Activated CD4-positive, alpha-beta memory T cell treated with anti-CD3 and anti-CD28 coated beads for 36 hours (primary cell): ENCODE measurements at regions of chr6 and their contacts with region 1.

Region 1: DNA sequence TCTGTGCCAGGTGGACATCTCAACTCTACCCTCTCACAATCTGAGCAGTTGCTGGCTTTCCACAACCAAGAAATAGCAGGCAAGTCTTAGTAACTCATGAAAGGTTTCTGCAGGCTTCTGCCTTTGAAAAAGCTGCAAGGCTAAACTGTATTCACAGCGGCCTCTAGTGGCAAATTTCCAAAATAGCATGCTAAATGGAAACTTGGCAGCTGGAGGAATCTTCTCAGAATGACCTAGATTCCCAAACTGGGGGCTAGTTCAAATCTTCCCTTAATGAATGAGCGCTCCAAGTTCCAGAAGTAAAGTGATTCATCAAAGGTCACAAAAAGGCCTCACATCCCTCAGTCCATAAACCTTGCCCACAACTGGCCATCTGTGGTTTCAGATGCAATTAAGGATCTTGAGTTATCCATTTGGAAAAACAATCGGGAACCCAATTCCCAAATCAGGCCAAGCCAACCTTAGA is 11.9 kb upstream of the CPNE5 start:
- DNase-seq: peak; percentile 34
- H3K4me3 Mint-ChIP-seq: no peak overlapping the region
- H3K27ac Mint-ChIP-seq: no peak overlapping the region
- H3K4me1 Mint-ChIP-seq: no peaks in the 10 kb centered on the region
- H3K27me3 Mint-ChIP-seq: no peaks in the 10 kb centered on the region

Region 2: GRCh38 chr6:36780442-36781177 is 70.6 kb before region 1 on chr6:
- CTCF ChIA-PET with region 1: interaction called, 28 read pairs
- POLR2A ChIA-PET with region 1: no interaction called
- intact Hi-C with region 1: loop called (anchors 2 kb)
- DNase-seq: no peak
- H3K4me3 Mint-ChIP-seq: no peak overlapping the region
- H3K27ac Mint-ChIP-seq: no peak overlapping the region
- H3K4me1 Mint-ChIP-seq: peaks cover 2% of the 10 kb centered on the region
- H3K27me3 Mint-ChIP-seq: no peaks in the 10 kb centered on the region

Region 3: DNA sequence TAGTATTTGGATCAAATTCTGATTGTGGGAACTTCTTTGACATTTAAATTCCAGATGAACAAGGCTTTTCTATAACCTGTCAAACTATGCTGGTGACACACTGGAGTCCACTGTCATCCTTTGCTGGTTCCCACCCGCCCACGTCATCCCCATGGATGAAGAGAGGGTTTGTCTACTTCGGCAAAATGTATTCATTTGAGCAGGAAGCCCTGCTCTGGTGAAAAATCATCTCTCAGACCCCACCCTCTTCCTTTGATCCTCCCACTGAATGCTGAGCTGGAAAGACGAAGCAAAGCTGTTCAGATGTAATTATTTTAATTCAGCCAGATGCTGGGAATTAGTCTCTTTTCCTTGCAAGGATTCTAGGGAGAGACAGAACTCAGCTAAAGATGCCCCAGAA is 62.4 kb before region 1 on chr6:
- CTCF ChIA-PET with region 1: interaction called, 28 read pairs
- POLR2A ChIA-PET with region 1: no interaction called
- intact Hi-C with region 1: loop called (anchors 2 kb)
- DNase-seq: peak; percentile 65
- H3K4me3 Mint-ChIP-seq: no peak overlapping the region
- H3K27ac Mint-ChIP-seq: no peak overlapping the region
- H3K4me1 Mint-ChIP-seq: peaks cover 5% of the 10 kb centered on the region
- H3K27me3 Mint-ChIP-seq: peaks cover 5% of the 10 kb centered on the region

Region 4: GRCh38 chr6:36822506-36823269 is 28.5 kb before region 1 on chr6:
- CTCF ChIA-PET with region 1: no interaction called
- POLR2A ChIA-PET with region 1: no interaction called
- intact Hi-C with region 1: no loop called
- DNase-seq: no peak
- H3K4me3 Mint-ChIP-seq: no peak overlapping the region
- H3K27ac Mint-ChIP-seq: no peak overlapping the region
- H3K4me1 Mint-ChIP-seq: peaks cover 3% of the 10 kb centered on the region
- H3K27me3 Mint-ChIP-seq: peaks cover 10% of the 10 kb centered on the region

Region 5: DNA sequence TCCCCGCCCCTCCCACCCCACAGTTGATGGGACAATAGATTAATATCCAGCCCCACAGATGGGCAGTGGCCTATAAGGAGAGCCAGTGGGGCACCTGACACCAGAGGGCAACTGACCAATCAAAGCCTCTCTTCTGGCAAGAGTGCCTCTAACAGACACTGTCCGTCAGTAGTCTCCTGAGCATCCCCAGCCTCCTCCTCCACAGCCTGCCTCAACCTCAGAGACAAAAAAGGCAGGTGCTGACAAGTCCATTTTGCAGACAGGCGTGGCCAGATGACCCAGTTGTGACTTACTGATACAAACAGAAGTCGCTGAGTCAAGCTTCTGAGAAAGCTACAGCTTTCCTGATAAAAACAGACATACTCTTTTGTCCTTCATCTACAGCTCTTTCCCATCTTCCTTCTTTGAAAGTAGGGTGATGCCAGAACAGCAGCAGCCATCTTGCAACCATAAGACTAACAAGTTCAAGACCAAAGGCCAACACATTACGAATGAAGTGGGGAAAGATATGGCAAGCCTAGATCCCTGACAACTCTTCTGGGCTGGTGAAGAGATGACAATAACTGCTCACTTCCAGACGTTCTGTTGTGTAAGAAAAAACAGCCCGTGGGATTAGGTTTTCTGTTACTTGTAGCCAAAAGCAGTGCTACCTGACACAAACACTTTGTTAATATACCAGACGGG is 11.1 kb after region 1 on chr6:
- CTCF ChIA-PET with region 1: interaction called, 41 read pairs
- POLR2A ChIA-PET with region 1: interaction called, 3 read pairs
- intact Hi-C with region 1: no loop called
- DNase-seq: peak; percentile 27
- H3K4me3 Mint-ChIP-seq: no peak overlapping the region
- H3K27ac Mint-ChIP-seq: peak overlapping the region; percentile 75
- H3K4me1 Mint-ChIP-seq: peaks cover 44% of the 10 kb centered on the region
- H3K27me3 Mint-ChIP-seq: no peaks in the 10 kb centered on the region

Region 6: GRCh38 chr6:36874443-36875249 is 23.5 kb after region 1 on chr6 and contains the start of gene PPIL1:
- CTCF ChIA-PET with region 1: interaction called, 19 read pairs
- POLR2A ChIA-PET with region 1: no interaction called
- intact Hi-C with region 1: no loop called
- DNase-seq: peak; percentile 88
- H3K4me3 Mint-ChIP-seq: peak within 1 kb of the TSS; percentile 98
- H3K27ac Mint-ChIP-seq: peak within 1 kb of the TSS; percentile 99
- H3K4me1 Mint-ChIP-seq: peaks cover 40% of the 10 kb centered on the region
- H3K27me3 Mint-ChIP-seq: peaks cover 2% of the 10 kb centered on the region
- total RNA-seq, gene PPIL1: 38.5 to 40.6 TPM